GM12878 (cell line): ENCODE measurements at regions of chr5 and their contacts with region 1.

Region 1: DNA sequence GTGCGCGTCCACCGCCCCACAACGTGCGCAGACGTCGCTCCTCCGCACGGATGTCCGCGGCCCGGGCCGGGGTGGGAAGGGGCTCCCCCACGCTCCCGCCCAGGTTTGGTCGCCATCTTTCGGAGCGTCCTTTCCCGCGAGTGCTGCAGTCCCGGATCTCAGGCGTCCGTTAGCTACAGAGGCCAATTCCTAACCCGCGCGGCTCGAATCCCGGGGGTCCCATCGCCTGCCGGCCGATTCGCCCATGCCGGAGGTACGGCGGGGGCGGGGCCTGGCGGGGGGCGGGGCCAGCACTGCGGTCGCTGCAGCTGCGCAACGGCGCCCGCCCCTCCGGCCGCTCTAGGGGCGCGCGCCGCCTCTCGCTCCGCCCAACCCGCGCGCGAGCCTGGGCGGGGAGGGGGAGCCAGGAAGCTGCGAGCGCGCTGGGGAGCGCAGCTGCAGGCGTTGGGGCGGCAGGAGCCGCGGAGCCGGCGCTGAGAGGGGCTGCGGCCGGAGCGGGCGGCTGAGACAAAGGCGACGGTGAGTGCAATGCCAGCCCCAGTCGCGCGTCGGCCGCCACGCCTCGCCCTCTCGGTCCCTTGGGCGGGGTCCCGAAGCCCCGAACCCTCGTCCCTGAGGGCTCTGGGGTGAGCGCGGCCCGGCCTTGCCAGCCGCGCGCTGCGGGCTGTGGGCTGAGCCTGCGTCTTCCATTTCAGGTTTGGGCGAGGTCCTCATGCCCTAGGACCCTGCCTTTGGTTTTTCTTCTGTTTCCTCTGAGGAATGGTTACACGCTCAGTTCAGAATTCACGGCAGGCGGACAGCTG is at the start of gene CDC42SE2:
- DNase-seq: no peak
- ATAC-seq: peak; percentile 86
- H3K4me3 ChIP-seq: peak within 1 kb of the TSS; percentile 86
- H3K27ac ChIP-seq: peak within 1 kb of the TSS; percentile 96
- H3K4me1 ChIP-seq: peaks cover 2% of the 10 kb centered on the region
- H3K27me3 ChIP-seq: no peaks in the 10 kb centered on the region
- CTCF ChIP-seq: no peak
- EP300 ChIP-seq: no peak
- POLR2A ChIP-seq: peak; percentile 98
- RAD21 ChIP-seq: 0 out of 2 replicates have a peak, but pooled peaks have one; percentile 14
- polyA plus RNA-seq, gene CDC42SE2: 57.0 to 78.8 TPM

Region 2: GRCh38 chr5:131022811-131023497 is 240.9 kb before region 1 on chr5:
- CTCF ChIA-PET with region 1: no interaction called
- POLR2A ChIA-PET with region 1: no interaction called
- RAD21 ChIA-PET with region 1: no interaction called
- SMC1A ChIA-PET with region 1: no interaction called
- in situ Hi-C with region 1: no loop called
- intact Hi-C with region 1: no loop called
- DNase-seq: no peak
- ATAC-seq: no peak
- H3K4me3 ChIP-seq: no peak overlapping the region
- H3K27ac ChIP-seq: no peak overlapping the region
- H3K4me1 ChIP-seq: no peaks in the 10 kb centered on the region
- H3K27me3 ChIP-seq: no peaks in the 10 kb centered on the region
- CTCF ChIP-seq: no peak
- EP300 ChIP-seq: no peak
- POLR2A ChIP-seq: no peak
- RAD21 ChIP-seq: no peak

Region 3: GRCh38 chr5:131139321-131139720 is 124.5 kb before region 1 on chr5:
- CTCF ChIA-PET with region 1: no interaction called
- POLR2A ChIA-PET with region 1: no interaction called
- RAD21 ChIA-PET with region 1: no interaction called
- SMC1A ChIA-PET with region 1: no interaction called
- in situ Hi-C with region 1: no loop called
- intact Hi-C with region 1: no loop called
- DNase-seq: no peak
- ATAC-seq: no peak
- H3K4me3 ChIP-seq: no peak overlapping the region
- H3K27ac ChIP-seq: no peak overlapping the region
- H3K4me1 ChIP-seq: no peaks in the 10 kb centered on the region
- H3K27me3 ChIP-seq: no peaks in the 10 kb centered on the region
- CTCF ChIP-seq: no peak
- EP300 ChIP-seq: no peak
- POLR2A ChIP-seq: no peak
- RAD21 ChIP-seq: no peak

Region 4: GRCh38 chr5:131209506-131210150 is 54.2 kb before region 1 on chr5:
- CTCF ChIA-PET with region 1: interaction called, 36 read pairs
- POLR2A ChIA-PET with region 1: interaction called, 309 read pairs
- RAD21 ChIA-PET with region 1: interaction called, 302 read pairs
- SMC1A ChIA-PET with region 1: interaction called, 1,218 read pairs
- in situ Hi-C with region 1: no loop called
- intact Hi-C with region 1: loop called (anchors 1 kb)
- DNase-seq: peak; percentile 94
- ATAC-seq: peak; percentile 77
- H3K4me3 ChIP-seq: peak overlapping the region; percentile 84
- H3K27ac ChIP-seq: peak overlapping the region; percentile 94
- H3K4me1 ChIP-seq: peaks cover 14% of the 10 kb centered on the region; the same call in 1 of the 2 replicates
- H3K27me3 ChIP-seq: no peaks in the 10 kb centered on the region
- CTCF ChIP-seq: no peak
- EP300 ChIP-seq: peak; percentile 82 to 88; a peak in 3 of 4 replicates
- POLR2A ChIP-seq: peak; percentile 71
- RAD21 ChIP-seq: peak; percentile 5; the same call in 1 of the 2 replicates

Region 5: DNA sequence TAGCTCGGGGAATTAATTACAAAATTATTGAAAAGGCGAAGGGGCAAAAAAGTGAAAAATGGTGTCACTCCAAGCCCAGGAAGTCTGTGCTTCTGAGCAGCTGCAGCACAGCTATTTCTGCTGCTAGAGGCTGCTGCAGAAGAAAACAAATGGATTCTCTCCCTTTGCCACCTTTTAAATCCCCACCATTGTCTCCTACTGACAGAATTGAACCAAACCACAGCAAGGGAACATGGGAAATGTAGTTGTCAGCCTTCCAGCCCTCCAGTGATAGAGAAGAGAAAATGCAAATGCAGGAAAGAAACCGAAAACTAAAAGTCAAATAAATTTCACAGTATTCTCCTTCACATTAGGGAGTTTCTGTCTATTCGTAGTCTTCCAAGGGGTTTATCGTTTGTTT is 33.4 kb before region 1 on chr5:
- CTCF ChIA-PET with region 1: interaction called, 65 read pairs
- POLR2A ChIA-PET with region 1: interaction called, 309 read pairs
- RAD21 ChIA-PET with region 1: interaction called, 161 read pairs
- SMC1A ChIA-PET with region 1: interaction called, 1,218 read pairs
- in situ Hi-C with region 1: no loop called
- intact Hi-C with region 1: no loop called
- DNase-seq: no peak
- ATAC-seq: peak; percentile 89
- H3K4me3 ChIP-seq: peak overlapping the region; percentile 6
- H3K27ac ChIP-seq: peak overlapping the region; percentile 38
- H3K4me1 ChIP-seq: peaks cover 14% of the 10 kb centered on the region; the same call in 1 of the 2 replicates
- H3K27me3 ChIP-seq: no peaks in the 10 kb centered on the region
- CTCF ChIP-seq: no peak
- EP300 ChIP-seq: no peak
- POLR2A ChIP-seq: no peak
- RAD21 ChIP-seq: no peak

Region 6: DNA sequence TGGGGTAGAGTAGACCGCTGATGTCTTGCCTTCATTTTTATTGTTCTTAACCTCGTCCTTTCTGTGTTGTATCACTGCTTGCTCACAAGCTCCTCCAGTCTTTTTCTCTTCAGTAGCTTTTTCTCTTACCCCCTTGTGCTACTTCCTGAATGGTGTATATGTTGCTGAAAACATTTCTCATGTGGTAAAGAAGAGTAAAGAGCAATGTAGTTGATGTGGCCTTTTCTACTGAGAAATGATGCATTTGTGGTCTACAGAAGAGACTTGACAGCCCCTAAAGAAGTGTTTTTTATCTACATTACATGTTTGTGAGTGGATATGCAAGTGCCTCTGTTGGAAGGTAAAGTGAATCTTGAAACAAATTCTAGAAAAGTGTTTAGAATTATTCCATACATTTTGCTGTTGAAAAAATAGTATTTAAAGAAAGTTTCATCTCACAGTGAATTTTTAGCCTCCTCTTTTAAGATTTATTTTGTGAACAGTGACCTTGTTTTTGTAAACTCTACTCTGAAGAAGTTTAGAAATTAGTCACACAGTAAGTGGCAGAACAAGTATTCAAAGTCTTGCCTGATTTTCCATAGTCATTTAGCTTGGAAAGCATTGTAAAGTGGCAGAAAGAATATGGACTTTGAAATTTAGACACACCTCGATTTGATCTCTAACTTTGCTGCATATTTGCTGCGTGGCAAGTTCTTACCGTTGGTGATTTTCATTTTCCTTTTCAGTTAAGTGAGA is 17.5 kb after region 1 on chr5:
- CTCF ChIA-PET with region 1: interaction called, 9 read pairs
- POLR2A ChIA-PET with region 1: interaction called, 47 read pairs
- RAD21 ChIA-PET with region 1: interaction called, 70 read pairs
- SMC1A ChIA-PET with region 1: interaction called, 180 read pairs
- in situ Hi-C with region 1: no loop called
- intact Hi-C with region 1: no loop called
- DNase-seq: no peak
- ATAC-seq: peak; percentile 61
- H3K4me3 ChIP-seq: peak overlapping the region; percentile 44
- H3K27ac ChIP-seq: peak overlapping the region; percentile 89
- H3K4me1 ChIP-seq: peaks cover 55% of the 10 kb centered on the region
- H3K27me3 ChIP-seq: no peaks in the 10 kb centered on the region
- CTCF ChIP-seq: no peak
- EP300 ChIP-seq: peak in 1 of 2 experiments; percentile 13; a peak in 1 of 4 replicates
- POLR2A ChIP-seq: no peak
- RAD21 ChIP-seq: peak; percentile 17; the same call in 1 of the 2 replicates

Region 7: GRCh38 chr5:131357739-131358561 is 94.1 kb after region 1 on chr5:
- CTCF ChIA-PET with region 1: interaction called, 3 read pairs
- POLR2A ChIA-PET with region 1: no interaction called
- RAD21 ChIA-PET with region 1: interaction called, 19 read pairs
- SMC1A ChIA-PET with region 1: interaction called, 11 read pairs
- in situ Hi-C with region 1: no loop called
- intact Hi-C with region 1: no loop called
- DNase-seq: no peak
- ATAC-seq: peak; percentile 74
- H3K4me3 ChIP-seq: no peak overlapping the region
- H3K27ac ChIP-seq: peak overlapping the region; percentile 45
- H3K4me1 ChIP-seq: peaks cover 35% of the 10 kb centered on the region
- H3K27me3 ChIP-seq: no peaks in the 10 kb centered on the region
- CTCF ChIP-seq: peak in 2 of 3 experiments; percentile 7 to 28; a peak in 2 of 6 replicates
- EP300 ChIP-seq: no peak
- POLR2A ChIP-seq: no peak
- RAD21 ChIP-seq: peak; percentile 56

Region 8: DNA sequence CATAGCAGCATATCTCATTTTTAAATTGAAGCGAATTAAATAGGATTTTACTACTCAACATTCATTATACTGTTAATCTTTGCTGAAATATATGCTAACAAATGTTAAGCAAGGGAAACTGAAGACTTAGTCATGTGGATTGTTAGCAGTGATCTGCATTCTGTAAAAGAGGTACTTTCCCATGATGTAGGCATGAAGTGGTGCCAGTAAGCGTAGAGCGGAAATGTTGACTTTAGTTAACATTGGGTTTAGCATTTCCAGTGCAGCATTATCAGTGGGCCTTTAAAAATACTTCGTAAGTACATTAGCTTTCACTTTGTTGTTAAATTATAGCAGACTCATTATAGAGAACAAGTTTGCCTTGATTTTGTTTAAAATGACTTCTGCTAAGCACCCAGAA is 130.3 kb after region 1 on chr5:
- CTCF ChIA-PET with region 1: interaction called, 4 read pairs
- POLR2A ChIA-PET with region 1: interaction called, 4 read pairs
- RAD21 ChIA-PET with region 1: interaction called, 23 read pairs
- SMC1A ChIA-PET with region 1: interaction called, 19 read pairs
- in situ Hi-C with region 1: no loop called
- intact Hi-C with region 1: no loop called
- DNase-seq: peak; percentile 66
- ATAC-seq: peak; percentile 84
- H3K4me3 ChIP-seq: no peak overlapping the region
- H3K27ac ChIP-seq: peak overlapping the region; percentile 55
- H3K4me1 ChIP-seq: peaks cover 29% of the 10 kb centered on the region
- H3K27me3 ChIP-seq: no peaks in the 10 kb centered on the region
- CTCF ChIP-seq: no peak
- EP300 ChIP-seq: no peak
- POLR2A ChIP-seq: no peak
- RAD21 ChIP-seq: no peak

Region 9: DNA sequence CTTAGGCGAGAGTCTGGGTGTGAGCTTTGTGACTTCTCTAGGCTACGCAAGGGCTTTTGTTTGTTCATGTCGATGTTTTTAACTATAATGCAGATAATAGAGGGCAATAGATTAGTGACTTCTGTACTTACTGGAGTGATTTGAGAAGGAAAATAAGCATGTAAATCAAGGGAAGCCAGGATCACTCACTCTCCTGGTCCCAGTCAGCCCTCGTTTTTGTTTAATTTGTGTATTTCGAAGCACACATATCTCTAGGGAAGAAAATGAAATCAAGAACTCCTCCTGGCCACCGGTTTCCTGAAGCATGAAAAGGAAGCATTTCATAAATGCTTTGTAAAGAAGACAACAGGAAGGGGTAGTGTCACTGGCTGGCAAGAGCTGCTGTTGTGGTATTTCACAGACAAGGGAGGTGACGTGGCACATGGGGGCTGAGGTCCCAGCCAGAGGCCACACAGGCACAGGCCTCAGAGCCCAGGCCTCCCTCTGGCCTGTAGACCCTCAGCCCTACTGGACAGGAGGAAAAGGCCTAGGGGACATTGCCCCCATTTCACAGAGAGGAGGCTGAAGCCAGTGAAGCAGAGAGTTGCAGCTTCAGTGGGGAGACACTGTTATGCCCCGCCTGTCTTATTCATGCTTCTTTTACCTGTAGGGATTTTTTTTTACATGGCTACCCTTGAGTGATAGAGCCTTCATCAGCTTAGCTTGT is 1192.6 kb after region 1 on chr5:
- CTCF ChIA-PET with region 1: no interaction called
- POLR2A ChIA-PET with region 1: no interaction called
- RAD21 ChIA-PET with region 1: no interaction called
- SMC1A ChIA-PET with region 1: no interaction called
- in situ Hi-C with region 1: no loop called
- intact Hi-C with region 1: no loop called
- DNase-seq: peak; percentile 73
- ATAC-seq: peak; percentile 78
- H3K4me3 ChIP-seq: peak overlapping the region; percentile 2; the same call in 1 of the 2 replicates
- H3K27ac ChIP-seq: peak overlapping the region; percentile 89
- H3K4me1 ChIP-seq: peaks cover 63% of the 10 kb centered on the region
- H3K27me3 ChIP-seq: no peaks in the 10 kb centered on the region
- CTCF ChIP-seq: no peak
- EP300 ChIP-seq: peak in 1 of 2 experiments; percentile 23; a peak in 1 of 4 replicates
- POLR2A ChIP-seq: no peak
- RAD21 ChIP-seq: no peak